Activated B cell treated with CpG ODN at 0.5 μM for 24 hours (primary cell): ENCODE measurements at regions of chr10 and their contacts with region 1.

Region 1: DNA sequence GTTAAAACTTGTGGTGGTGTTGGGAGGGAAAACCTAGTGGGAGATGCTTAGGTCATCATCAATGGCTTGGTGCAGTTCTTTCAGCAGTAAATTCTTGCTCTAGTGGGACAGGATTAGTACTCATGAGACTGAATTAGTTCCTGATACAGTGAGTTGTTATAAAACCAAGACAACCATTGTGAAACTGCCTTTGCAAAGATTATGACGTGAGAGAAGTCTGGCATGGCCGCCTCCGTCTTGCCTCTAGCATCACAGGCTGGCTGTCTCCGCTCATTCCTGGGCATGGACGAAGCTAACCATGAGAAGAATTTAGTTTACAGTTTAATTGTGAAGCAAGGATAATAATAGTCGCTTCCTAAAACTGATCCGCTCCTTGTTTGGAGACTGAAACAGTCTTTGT is 186.4 kb downstream of the KIF20B start:
- DNase-seq: peak; percentile 32
- ATAC-seq: peak; percentile 75
- H3K4me3 Mint-ChIP-seq: peak overlapping the region; percentile 81
- H3K27ac Mint-ChIP-seq: peak overlapping the region; percentile 98
- H3K4me1 Mint-ChIP-seq: peaks cover 54% of the 10 kb centered on the region
- H3K27me3 Mint-ChIP-seq: peaks cover 3% of the 10 kb centered on the region
- CTCF ChIP-seq: no peak

Region 2: GRCh38 chr10:89643431-89644331 is 244.1 kb before region 1 on chr10:
- CTCF ChIA-PET with region 1: no interaction called
- POLR2A ChIA-PET with region 1: no interaction called
- intact Hi-C with region 1: loop called (anchors 10 kb)
- DNase-seq: peak; percentile 46
- ATAC-seq: peak; percentile 91
- H3K4me3 Mint-ChIP-seq: no peak overlapping the region
- H3K27ac Mint-ChIP-seq: no peak overlapping the region
- H3K4me1 Mint-ChIP-seq: peaks cover 13% of the 10 kb centered on the region
- H3K27me3 Mint-ChIP-seq: no peaks in the 10 kb centered on the region
- CTCF ChIP-seq: no peak

Region 3: GRCh38 chr10:89655722-89656121 is 232.1 kb before region 1 on chr10:
- CTCF ChIA-PET with region 1: no interaction called
- POLR2A ChIA-PET with region 1: no interaction called
- intact Hi-C with region 1: no loop called
- DNase-seq: no peak
- ATAC-seq: no peak
- H3K4me3 Mint-ChIP-seq: no peak overlapping the region
- H3K27ac Mint-ChIP-seq: peak overlapping the region; percentile 6
- H3K4me1 Mint-ChIP-seq: peaks cover 38% of the 10 kb centered on the region
- H3K27me3 Mint-ChIP-seq: no peaks in the 10 kb centered on the region
- CTCF ChIP-seq: no peak

Region 4: GRCh38 chr10:89808842-89809241 is 79.0 kb before region 1 on chr10:
- CTCF ChIA-PET with region 1: no interaction called
- POLR2A ChIA-PET with region 1: no interaction called
- intact Hi-C with region 1: no loop called
- DNase-seq: no peak
- ATAC-seq: no peak
- H3K4me3 Mint-ChIP-seq: no peak overlapping the region
- H3K27ac Mint-ChIP-seq: no peak overlapping the region
- H3K4me1 Mint-ChIP-seq: no peaks in the 10 kb centered on the region
- H3K27me3 Mint-ChIP-seq: peaks cover under 1% of the 10 kb centered on the region
- CTCF ChIP-seq: no peak

Region 5: DNA sequence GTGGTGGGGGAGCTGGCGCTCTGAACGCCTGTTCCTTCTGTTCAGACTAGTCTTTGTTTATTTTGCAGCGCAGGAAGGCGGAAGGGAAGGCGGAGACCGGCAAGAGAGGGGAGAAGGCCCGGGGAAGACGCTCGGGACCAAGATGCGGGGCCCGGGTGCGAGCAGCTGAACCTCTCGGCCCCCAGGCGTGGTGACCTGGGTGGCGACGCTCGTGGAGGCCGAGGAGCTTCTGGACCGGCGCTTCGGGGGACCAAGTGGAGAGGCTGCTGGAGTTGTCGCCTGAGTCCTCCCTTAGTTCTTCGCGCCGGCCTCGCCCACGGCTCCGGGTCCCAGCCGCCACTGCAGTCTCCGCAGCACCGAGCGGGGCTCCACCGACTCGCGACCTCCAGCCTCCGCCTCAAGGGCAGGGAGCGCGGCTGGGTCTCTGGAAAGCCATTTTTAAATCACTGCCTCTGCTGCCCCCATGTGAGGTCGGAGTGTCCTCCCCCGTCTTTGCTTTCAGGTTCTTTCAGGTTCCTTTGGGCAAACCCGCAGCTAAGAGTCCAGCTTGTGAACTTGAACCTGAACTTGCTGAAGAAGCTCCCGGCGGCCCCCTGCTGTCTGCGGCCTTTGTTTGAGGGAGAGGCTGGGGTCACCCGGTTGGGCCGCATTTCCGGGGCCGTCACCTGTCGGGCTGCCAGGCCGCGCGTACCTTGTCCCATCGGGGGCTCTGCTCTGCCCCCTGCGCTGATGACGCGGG is 50.5 kb before region 1 on chr10:
- CTCF ChIA-PET with region 1: no interaction called
- POLR2A ChIA-PET with region 1: interaction called, 6 read pairs
- intact Hi-C with region 1: loop called (anchors 1 kb)
- DNase-seq: peak; percentile 48
- ATAC-seq: peak; percentile 70
- H3K4me3 Mint-ChIP-seq: peak overlapping the region; percentile 83
- H3K27ac Mint-ChIP-seq: peak overlapping the region; percentile 75
- H3K4me1 Mint-ChIP-seq: peaks cover 15% of the 10 kb centered on the region
- H3K27me3 Mint-ChIP-seq: peaks cover 3% of the 10 kb centered on the region
- CTCF ChIP-seq: no peak

Region 6: DNA sequence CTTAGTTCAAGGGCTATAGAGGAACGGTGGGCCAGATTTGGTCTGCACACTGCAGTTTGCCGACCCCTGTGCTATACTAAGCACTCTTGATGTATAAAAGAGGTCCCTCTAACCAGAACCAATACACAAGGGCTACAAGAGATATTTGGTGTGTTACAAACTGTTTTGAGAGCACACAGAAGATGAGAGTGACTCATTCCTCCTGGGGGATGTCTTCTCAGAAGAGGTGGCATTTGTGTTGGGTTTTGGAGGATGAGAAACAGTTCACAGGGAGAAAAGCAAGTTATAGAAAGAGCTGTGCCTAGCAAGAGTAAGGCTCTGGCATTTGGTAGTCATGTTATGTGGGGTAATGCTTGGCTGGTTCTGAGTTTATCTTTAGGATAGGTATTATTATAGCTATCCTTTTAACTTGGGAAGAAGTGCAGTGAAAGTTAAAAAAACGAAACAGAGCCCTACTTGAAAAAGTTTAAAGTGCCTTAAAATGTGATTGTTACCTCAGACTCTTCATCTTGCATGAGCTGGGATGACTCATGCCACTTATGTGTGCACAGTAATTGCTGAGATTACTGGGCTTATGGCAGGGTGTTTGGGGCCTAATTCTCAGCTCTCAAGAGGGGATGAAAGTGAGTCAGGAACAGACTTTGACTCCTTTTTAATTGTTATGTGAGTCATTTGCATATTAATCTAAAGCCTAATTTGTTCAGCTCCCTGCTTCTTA is 26.1 kb before region 1 on chr10:
- CTCF ChIA-PET with region 1: interaction called, 3 read pairs
- POLR2A ChIA-PET with region 1: interaction called, 5 read pairs
- intact Hi-C with region 1: loop called (anchors 1 kb)
- DNase-seq: no peak
- ATAC-seq: peak; percentile 81
- H3K4me3 Mint-ChIP-seq: peak overlapping the region; percentile 22
- H3K27ac Mint-ChIP-seq: peak overlapping the region; percentile 54
- H3K4me1 Mint-ChIP-seq: peaks cover 20% of the 10 kb centered on the region
- H3K27me3 Mint-ChIP-seq: no peaks in the 10 kb centered on the region
- CTCF ChIP-seq: no peak

Region 7: GRCh38 chr10:89873055-89873454 is 14.8 kb before region 1 on chr10:
- CTCF ChIA-PET with region 1: interaction called, 3 read pairs
- POLR2A ChIA-PET with region 1: interaction called, 3 read pairs
- intact Hi-C with region 1: loop called (anchors 1 kb)
- DNase-seq: no peak
- ATAC-seq: peak; percentile 91
- H3K4me3 Mint-ChIP-seq: no peak overlapping the region
- H3K27ac Mint-ChIP-seq: no peak overlapping the region
- H3K4me1 Mint-ChIP-seq: peaks cover 21% of the 10 kb centered on the region
- H3K27me3 Mint-ChIP-seq: no peaks in the 10 kb centered on the region
- CTCF ChIP-seq: no peak

Region 8: DNA sequence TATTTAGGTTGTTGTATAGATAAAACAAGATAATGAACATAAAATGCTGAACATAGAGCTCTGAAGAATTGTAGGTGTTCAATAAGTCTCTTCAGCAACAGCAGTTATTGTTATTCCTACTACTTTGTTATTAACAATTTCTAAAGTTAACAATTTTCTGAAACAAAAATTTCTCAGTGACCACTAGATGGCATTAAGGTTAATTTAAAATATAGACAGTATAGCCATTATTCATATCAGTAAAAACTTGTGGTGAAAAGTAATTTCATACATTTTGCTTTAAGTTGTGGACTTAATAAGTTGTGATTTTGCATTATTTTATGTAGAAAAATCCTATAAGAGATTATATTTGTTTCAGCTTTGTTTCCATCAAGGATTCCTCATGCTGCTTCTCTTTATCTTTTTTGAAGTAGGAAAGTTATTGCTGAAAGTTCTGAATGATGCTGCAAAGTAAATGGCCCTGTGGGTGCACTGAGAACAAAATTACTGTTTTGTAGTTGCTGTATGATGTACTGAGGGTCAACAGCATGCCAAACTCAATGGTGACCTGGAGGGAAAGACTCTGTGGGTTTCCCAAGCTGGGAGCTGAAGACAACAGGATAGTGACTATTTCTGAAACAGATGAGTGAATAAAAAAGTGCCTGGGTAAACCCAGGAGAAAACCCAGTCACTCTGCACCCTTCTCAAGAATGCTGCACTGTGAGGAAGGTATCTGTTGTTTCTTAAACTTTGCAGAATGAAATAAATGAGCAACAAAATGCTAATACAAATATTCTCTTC is 67.1 kb after region 1 on chr10:
- CTCF ChIA-PET with region 1: no interaction called
- POLR2A ChIA-PET with region 1: no interaction called
- intact Hi-C with region 1: loop called (anchors 5 kb)
- DNase-seq: no peak
- ATAC-seq: no peak
- H3K4me3 Mint-ChIP-seq: no peak overlapping the region
- H3K27ac Mint-ChIP-seq: no peak overlapping the region
- H3K4me1 Mint-ChIP-seq: peaks cover 10% of the 10 kb centered on the region
- H3K27me3 Mint-ChIP-seq: no peaks in the 10 kb centered on the region
- CTCF ChIP-seq: peak; percentile 35

Region 9: DNA sequence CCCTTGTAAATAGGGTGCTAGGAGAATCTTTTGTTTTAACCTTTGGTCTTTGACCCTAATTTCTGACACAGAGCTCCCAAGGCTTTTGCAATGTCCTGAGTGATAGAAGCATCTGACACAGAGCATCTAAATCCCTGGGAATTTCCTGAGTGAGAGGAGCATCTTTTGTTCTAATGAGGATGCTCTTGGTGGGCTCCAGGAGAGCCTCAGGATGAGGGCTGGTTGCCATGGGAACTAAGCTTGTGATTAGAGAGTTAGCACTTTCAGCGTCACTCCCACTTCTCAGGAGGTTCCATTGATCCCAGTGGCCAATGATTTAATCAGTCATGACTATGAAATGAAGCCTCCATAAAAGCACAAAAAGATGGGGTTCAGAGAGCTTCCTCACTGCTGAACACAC is 78.4 kb after region 1 on chr10:
- CTCF ChIA-PET with region 1: no interaction called
- POLR2A ChIA-PET with region 1: no interaction called
- intact Hi-C with region 1: no loop called
- DNase-seq: no peak
- ATAC-seq: no peak
- H3K4me3 Mint-ChIP-seq: no peak overlapping the region
- H3K27ac Mint-ChIP-seq: no peak overlapping the region
- H3K4me1 Mint-ChIP-seq: no peaks in the 10 kb centered on the region
- H3K27me3 Mint-ChIP-seq: no peaks in the 10 kb centered on the region
- CTCF ChIP-seq: no peak

Region 10: GRCh38 chr10:90047243-90047729 is 159.5 kb after region 1 on chr10:
- CTCF ChIA-PET with region 1: no interaction called
- POLR2A ChIA-PET with region 1: no interaction called
- intact Hi-C with region 1: loop called (anchors 1 kb)
- DNase-seq: no peak
- ATAC-seq: peak; percentile 82
- H3K4me3 Mint-ChIP-seq: peak overlapping the region; percentile 68
- H3K27ac Mint-ChIP-seq: peak overlapping the region; percentile 94
- H3K4me1 Mint-ChIP-seq: peaks cover 44% of the 10 kb centered on the region
- H3K27me3 Mint-ChIP-seq: no peaks in the 10 kb centered on the region
- CTCF ChIP-seq: no peak